Ovary (tissue), 10 donors: ENCODE measurements at regions of chr13 and their contacts with region 1.

Region 1: GRCh38 chr13:25827831-25828465 is 223.9 kb downstream of the SHISA2 start:
- DNase-seq: no peak
- H3K4me3 ChIP-seq: no peak overlapping the region
- H3K27ac ChIP-seq: no peak overlapping the region
- H3K4me1 ChIP-seq: no peaks in the 10 kb centered on the region
- H3K27me3 ChIP-seq: no peaks in the 10 kb centered on the region
- CTCF ChIP-seq: no peak
- EP300 ChIP-seq: no peak
- POLR2A ChIP-seq: no peak

Region 2: DNA sequence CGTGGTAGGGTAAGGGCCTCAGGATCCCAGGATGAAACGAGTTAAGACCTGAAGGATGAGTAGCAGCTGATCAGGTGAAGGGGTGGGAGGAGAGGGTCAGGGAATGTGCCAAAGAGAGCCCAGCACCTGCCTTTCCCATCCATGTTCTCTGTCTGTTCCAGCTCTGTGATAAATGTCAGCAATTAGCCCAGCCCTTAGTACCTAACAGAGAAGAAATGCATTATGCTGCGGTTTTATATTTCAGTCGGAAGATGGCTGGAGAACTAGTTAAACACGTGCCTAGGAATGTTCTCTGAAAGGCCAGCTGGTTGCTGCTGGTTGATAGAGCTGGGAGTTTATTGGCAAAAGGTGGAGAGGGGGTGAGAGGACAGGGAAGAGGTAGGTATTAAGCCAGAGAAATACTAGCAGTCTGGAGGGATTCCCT is 44.3 kb before region 1 on chr13:
- intact Hi-C with region 1: loop called in 1 of 4 experiments (anchors 1 kb)
- DNase-seq: no peak
- H3K4me3 ChIP-seq: no peak overlapping the region
- H3K27ac ChIP-seq: no peak overlapping the region
- H3K4me1 ChIP-seq: no peaks in the 10 kb centered on the region
- H3K27me3 ChIP-seq: no peaks in the 10 kb centered on the region
- CTCF ChIP-seq: no peak
- EP300 ChIP-seq: no peak
- POLR2A ChIP-seq: no peak